ENCODE measurements at regions of chr2 and their contacts with region 1.

Region 1: DNA sequence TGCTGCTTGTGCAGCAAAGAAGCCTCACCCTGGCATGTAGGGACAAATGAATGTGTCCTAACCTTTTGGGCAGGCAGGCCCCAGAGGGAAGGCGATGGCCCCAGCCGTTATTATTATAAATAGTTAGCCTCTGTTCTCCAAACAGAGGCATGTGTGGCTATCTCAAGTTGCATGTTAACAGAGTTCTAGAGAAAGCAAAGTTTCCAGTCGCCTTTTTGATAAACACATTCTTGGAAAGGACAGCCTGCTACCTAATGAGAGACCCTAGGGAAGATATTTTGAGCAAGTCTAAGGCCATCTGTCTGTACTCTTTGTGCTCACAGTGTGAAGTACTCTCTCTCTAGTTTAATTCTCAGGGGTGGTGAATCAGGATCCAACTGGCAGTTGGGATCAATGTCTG is 97.4 kb upstream of the FHL2 start:
- DNase-seq: no peak
- ATAC-seq: peak; percentile 83

Region 2: GRCh38 chr2:105515581-105516415 is 19.5 kb after region 1 on chr2:
- intact Hi-C with region 1: loop called (anchors 1 kb)
- DNase-seq: peak; percentile 87
- ATAC-seq: peak; percentile 83

Region 3: DNA sequence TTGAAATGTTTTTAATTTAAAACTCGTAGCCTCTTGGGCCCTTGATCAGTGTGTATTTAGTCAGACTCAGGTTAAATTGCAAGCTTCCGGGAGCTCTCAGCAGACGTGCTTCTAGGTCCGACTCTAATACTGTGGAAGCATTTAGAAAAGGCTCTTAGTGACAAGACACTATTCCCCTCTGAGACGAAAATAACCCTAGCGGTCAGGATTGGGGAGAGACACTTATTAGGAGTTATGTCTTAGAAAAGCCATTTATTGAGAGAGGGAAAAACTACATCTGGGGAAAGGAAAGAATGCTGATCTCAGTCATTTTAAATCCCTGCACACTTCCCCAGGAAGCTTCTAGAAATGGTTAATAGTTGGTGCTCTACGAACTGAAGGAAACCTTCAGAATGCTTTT is 137.9 kb after region 1 on chr2:
- intact Hi-C with region 1: no loop called
- DNase-seq: no peak
- ATAC-seq: no peak

Measured in Right ventricle myocardium inferior (tissue), 1 donor.